Ascending aorta (tissue), 2 donors: ENCODE measurements at regions of chr12 and their contacts with region 1.

Region 1: DNA sequence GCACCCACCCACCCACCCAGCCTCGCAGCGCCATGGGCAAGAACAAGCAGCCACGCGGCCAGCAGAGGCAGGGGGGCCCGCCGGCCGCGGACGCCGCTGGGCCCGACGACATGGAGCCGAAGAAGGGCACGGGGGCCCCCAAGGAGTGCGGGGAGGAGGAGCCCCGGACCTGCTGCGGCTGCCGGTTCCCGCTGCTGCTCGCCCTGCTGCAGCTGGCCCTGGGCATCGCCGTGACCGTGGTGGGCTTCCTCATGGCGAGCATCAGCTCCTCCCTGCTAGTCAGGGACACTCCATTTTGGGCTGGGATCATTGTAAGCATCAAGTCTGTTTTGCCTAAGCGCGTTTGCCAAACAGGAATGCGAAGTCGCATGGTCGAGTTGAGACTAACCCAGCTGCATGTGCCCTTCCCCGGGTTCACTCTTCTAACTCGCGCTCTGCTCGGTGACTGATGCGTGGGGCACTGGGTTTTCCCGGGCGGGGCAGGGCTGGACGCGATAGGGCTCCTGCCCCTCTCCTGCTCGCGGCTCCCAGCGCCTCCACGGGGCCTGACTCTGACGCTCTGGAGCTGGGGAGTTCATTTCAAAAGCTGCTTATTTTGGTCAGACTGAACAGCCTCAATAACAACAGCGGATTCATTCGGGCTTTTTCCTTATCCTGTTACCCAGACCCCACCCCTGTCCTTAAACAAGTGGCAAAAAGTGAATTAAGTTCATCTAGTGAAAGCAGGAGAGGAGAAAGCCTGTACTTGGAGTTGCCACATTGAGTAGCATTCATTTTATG is 458 bp downstream of the SSPN start:
- DNase-seq: peak in 1 of 2 donors; percentile 79
- H3K4me3 ChIP-seq: peak overlapping the region; percentile 58 to 74
- H3K27ac ChIP-seq: peak overlapping the region; percentile 88 to 90
- H3K4me1 ChIP-seq: peaks cover 0 to 21% of the 10 kb centered on the region in 2 donors
- H3K27me3 ChIP-seq: no peaks in the 10 kb centered on the region
- CTCF ChIP-seq: no peak

Region 2: DNA sequence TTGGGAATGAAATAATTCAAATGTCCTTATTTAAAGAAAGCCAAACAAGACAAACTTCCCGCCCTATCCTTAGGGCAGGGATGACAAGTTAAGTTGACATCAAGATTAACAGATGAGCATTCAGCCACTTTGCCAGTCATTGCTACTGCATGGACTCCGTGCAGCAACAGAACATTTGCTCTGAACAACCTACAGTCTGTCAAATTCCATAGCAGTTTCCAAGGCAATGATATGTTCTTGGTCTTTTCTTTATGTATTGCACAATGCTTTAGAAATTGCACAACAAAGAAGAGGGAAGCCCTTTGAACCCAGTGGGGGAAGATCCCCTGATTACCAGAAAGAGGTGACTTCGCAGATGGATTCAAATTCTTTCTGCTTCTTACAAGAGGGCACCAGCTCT is 1516.7 kb before region 1 on chr12:
- intact Hi-C with region 1: no loop called
- DNase-seq: no peak
- H3K4me3 ChIP-seq: no peak overlapping the region
- H3K27ac ChIP-seq: no peak overlapping the region
- H3K4me1 ChIP-seq: no peaks in the 10 kb centered on the region
- H3K27me3 ChIP-seq: no peaks in the 10 kb centered on the region
- CTCF ChIP-seq: no peak

Region 3: GRCh38 chr12:25250744-25251730 is 944.8 kb before region 1 on chr12 and contains the start of gene KRAS:
- intact Hi-C with region 1: loop called (anchors 5 kb)
- DNase-seq: peak; percentile 82 to 98
- H3K4me3 ChIP-seq: peak within 1 kb of the TSS; percentile 93
- H3K27ac ChIP-seq: peak within 1 kb of the TSS; percentile 94 to 96
- H3K4me1 ChIP-seq: peaks cover 2 to 4% of the 10 kb centered on the region in 2 donors
- H3K27me3 ChIP-seq: no peaks in the 10 kb centered on the region
- CTCF ChIP-seq: no peak
- total RNA-seq, gene KRAS: 9.8 TPM

Region 4: DNA sequence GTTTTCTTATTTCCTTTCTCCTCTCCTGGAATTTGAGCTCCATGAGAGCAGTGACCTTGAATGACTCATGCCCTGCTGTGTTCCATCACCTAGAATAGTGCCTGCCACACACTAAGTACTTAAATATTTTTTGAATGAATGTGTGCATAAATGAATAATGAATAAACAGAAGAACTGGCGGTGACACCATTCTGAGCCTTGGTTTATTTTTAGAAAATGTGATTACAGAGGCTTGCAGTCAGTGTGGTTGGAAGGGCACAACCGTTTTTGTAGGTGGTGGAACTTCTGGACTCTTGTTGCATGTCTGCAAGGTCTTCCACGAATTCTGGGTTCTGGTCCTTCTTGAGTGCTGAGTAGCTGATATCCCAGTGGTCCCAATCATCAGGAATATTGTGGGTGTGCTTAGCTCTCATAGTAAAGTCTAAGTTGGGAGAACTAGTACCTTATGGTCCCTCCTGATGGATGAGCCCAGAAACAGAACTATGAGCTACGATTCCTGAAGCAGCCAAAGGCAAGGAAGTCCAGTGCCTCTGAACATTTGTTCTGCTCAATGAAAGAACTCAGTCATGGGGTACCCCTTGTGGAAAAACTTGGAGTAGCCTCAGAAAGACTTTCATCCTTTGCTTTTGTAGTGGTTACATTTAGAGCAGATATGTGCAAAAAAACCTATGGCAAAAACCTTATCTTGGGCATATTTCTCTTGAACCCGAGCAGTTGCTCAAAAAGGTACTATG is 42.2 kb before region 1 on chr12:
- intact Hi-C with region 1: loop called (anchors 2 kb)
- DNase-seq: peak in 1 of 2 donors; percentile 74
- H3K4me3 ChIP-seq: no peak overlapping the region
- H3K27ac ChIP-seq: peak overlapping the region; percentile 75 to 78
- H3K4me1 ChIP-seq: peaks cover 3 to 36% of the 10 kb centered on the region in 2 donors
- H3K27me3 ChIP-seq: no peaks in the 10 kb centered on the region
- CTCF ChIP-seq: peak; percentile 6 to 38 (median 28)

Region 5: GRCh38 chr12:26177283-26177682 is 18.5 kb before region 1 on chr12:
- intact Hi-C with region 1: no loop called
- DNase-seq: no peak
- H3K4me3 ChIP-seq: no peak overlapping the region
- H3K27ac ChIP-seq: no peak overlapping the region
- H3K4me1 ChIP-seq: no peaks in the 10 kb centered on the region
- H3K27me3 ChIP-seq: no peaks in the 10 kb centered on the region
- CTCF ChIP-seq: no peak

Region 6: GRCh38 chr12:26239122-26239851 is 43.5 kb after region 1 on chr12:
- intact Hi-C with region 1: loop called (anchors 2 kb)
- DNase-seq: peak; percentile 52 to 88
- H3K4me3 ChIP-seq: no peak overlapping the region
- H3K27ac ChIP-seq: peak overlapping the region; percentile 62 to 75
- H3K4me1 ChIP-seq: no peaks in the 10 kb centered on the region
- H3K27me3 ChIP-seq: no peaks in the 10 kb centered on the region
- CTCF ChIP-seq: no peak

Region 7: DNA sequence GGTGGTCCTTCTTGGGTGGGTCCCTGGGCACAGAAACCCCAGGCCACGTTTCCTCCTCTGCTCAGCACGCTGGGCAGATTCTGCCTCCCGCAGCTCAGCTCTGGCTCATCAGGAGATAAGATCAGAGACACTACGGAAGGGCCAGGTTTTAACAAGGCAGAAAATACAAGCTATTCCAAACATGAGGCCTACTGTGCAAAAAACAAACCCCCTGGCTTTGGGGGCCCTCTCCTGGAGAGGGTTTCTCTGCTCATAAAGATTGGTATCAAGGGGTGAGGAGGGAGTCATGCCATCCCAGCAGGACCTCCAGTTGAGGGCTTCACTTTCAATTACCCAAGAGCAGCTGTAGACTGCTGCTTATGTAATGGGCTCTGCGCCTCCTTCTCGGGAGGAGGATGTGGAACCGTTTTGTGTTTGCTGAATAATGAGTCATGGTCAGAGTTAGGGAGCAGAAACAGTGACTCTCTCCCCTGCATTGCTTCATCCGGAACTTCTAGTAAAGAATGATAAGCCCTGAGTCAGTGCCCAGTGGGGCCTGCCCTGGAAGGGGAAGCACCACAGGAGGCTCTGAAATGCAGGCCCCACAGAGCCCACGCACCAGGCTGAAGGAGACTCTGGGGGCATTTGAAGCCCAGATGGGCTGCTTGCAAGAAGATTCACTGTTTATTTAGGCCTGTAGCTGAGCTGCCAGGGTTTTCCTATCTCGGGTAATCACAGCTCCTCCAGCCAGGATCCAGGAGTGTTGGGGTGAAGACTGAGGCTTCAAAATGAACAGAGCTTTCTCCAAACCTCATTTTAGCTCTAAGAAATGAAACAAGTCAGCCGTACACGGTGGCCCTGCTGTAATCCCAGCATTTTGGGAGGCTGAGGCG is 78.8 kb after region 1 on chr12:
- intact Hi-C with region 1: loop called (anchors 2 kb)
- DNase-seq: peak; percentile 78 to 96
- H3K4me3 ChIP-seq: no peak overlapping the region
- H3K27ac ChIP-seq: peak overlapping the region; percentile 80 to 84
- H3K4me1 ChIP-seq: peaks cover 6 to 30% of the 10 kb centered on the region in 2 donors
- H3K27me3 ChIP-seq: no peaks in the 10 kb centered on the region
- CTCF ChIP-seq: no peak

Region 8: DNA sequence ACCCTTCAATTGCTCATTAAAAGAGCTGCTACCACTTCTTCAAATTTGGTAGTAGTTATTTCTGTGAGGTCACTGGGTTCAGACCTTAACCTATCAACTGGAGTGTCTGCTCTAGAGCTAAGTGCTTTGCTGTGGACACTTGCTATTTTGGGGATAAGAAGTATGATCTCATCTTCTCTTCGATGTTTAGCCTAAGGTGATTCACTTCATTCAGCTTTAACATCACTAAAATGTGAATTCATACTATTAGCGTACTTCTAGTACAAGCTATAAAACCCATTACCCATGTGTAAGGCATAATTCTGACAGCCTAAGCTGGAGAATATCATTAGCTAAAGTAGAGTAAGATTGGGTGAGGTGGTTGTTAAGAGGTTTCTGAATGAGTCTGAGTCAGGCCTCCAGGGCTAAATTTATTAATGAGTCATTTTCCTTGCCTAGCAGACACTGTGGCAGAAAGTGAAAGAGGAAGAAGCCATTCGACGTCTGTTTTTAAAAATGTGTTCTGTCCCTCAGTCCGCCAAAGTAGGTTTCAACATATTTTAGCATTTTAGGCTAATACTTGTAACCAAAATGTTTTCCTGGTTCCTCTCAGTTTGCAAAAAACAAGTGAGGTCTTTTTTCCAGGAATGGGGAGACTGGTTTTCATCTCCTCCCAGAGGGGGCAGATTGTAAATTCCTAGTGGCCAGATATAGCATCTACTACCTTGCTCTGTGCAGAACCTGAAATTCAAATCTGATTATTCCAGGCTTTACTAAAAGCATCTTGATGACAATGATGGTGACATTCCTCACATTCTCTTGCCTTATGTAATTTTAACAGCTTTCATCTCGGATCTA is 103.2 kb after region 1 on chr12:
- intact Hi-C with region 1: loop called (anchors 1 kb)
- DNase-seq: no peak
- H3K4me3 ChIP-seq: peak overlapping the region; percentile 23 to 50
- H3K27ac ChIP-seq: peak overlapping the region; percentile 75 to 79
- H3K4me1 ChIP-seq: peaks cover 0 to 11% of the 10 kb centered on the region in 2 donors
- H3K27me3 ChIP-seq: no peaks in the 10 kb centered on the region
- CTCF ChIP-seq: peak in 2 of 3 experiments; percentile 23 to 34

Region 9: DNA sequence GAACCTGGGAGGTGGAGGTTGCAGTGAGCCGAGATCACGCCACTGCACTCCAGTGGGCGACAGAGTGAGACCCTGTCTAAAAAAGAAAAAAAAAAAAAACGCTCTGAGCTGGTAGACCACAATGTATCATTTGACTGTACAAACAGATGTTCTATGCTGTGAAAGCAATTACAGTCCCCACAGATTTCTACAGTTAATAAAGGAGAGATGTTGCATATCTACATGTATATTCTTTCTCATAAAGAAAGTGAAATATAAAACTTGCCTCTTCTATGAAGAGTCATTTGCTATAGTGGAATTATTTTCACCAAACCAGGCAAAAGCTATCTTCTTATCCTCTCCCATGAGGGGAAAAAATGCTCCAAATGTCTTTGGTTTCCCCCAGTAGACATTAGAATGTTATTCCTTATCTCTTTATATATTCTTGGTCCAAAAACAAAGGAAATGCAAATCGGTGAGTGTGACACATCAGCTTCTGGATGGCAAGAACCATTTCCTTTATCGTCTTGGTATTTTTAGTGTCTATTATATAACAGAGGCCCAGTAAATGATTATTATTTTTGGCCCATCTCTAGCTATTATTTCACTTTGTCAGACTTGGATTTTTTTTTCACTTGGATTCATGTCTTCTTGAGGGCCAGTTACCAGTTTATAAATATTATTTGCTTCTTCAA is 229.9 kb after region 1 on chr12:
- intact Hi-C with region 1: no loop called
- DNase-seq: no peak
- H3K4me3 ChIP-seq: no peak overlapping the region
- H3K27ac ChIP-seq: no peak overlapping the region
- H3K4me1 ChIP-seq: no peaks in the 10 kb centered on the region
- H3K27me3 ChIP-seq: no peaks in the 10 kb centered on the region
- CTCF ChIP-seq: no peak